Common myeloid progenitor, CD34-positive (primary cell): ENCODE measurements at regions of chr17 and their contacts with region 1.

Region 1: DNA sequence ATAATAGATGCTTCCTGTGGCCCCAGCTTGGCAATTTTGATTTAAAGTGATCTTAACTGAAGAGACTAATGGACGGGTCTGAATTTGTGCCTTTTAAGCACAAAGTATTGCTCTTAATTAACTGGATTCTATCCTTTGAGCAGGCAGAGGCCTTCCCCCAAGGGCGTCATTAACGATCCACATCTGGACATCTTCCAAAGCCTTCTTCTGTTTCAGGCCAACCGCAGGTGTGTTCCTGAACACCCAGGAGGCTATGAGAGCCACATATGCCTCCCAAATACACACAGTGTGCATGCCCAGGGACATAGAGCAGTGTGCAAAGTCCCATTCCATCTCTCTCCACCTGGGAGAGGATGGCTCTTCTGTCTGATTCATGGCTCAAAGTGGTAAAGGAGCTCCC is 42.3 kb downstream of the MAPT start:
- DNase-seq: no peak
- H3K4me3 ChIP-seq: no peak overlapping the region
- H3K27ac ChIP-seq: no peak overlapping the region
- H3K4me1 ChIP-seq: no peaks in the 10 kb centered on the region
- H3K27me3 ChIP-seq: peaks cover 0 to 7% (median 5%) of the 10 kb centered on the region in 5 experiments

Region 2: GRCh38 chr17:45948881-45949624 is 12.4 kb after region 1 on chr17:
- CTCF ChIA-PET with region 1: interaction called, 13 read pairs
- POLR2A ChIA-PET with region 1: no interaction called
- DNase-seq: peak; percentile 61 to 77 (median 73)
- H3K4me3 ChIP-seq: peak overlapping the region in 2 of 7 experiments; percentile 41 to 52
- H3K27ac ChIP-seq: no peak overlapping the region
- H3K4me1 ChIP-seq: peaks cover 0 to 13% (median 8%) of the 10 kb centered on the region in 4 experiments
- H3K27me3 ChIP-seq: peaks cover 0 to 8% (median 0%) of the 10 kb centered on the region in 5 experiments